Ascending aorta (tissue), 2 donors: ENCODE measurements at regions of chr12 and their contacts with region 1.

Region 1: GRCh38 chr12:90978117-90978770 is 23.3 kb upstream of the CCER1 start:
- DNase-seq: no peak
- H3K4me3 ChIP-seq: no peak overlapping the region
- H3K27ac ChIP-seq: no peak overlapping the region
- H3K4me1 ChIP-seq: no peaks in the 10 kb centered on the region
- H3K27me3 ChIP-seq: no peaks in the 10 kb centered on the region
- CTCF ChIP-seq: peak; percentile 39 to 60 (median 55)

Region 2: GRCh38 chr12:91178139-91178561 is 199.9 kb after region 1 on chr12:
- intact Hi-C with region 1: loop called (anchors 5 kb)
- DNase-seq: no peak
- H3K4me3 ChIP-seq: peak overlapping the region; percentile 46 to 48
- H3K27ac ChIP-seq: no peak overlapping the region
- H3K4me1 ChIP-seq: no peaks in the 10 kb centered on the region
- H3K27me3 ChIP-seq: no peaks in the 10 kb centered on the region
- CTCF ChIP-seq: peak in 2 of 3 experiments; percentile 39 to 60

Region 3: DNA sequence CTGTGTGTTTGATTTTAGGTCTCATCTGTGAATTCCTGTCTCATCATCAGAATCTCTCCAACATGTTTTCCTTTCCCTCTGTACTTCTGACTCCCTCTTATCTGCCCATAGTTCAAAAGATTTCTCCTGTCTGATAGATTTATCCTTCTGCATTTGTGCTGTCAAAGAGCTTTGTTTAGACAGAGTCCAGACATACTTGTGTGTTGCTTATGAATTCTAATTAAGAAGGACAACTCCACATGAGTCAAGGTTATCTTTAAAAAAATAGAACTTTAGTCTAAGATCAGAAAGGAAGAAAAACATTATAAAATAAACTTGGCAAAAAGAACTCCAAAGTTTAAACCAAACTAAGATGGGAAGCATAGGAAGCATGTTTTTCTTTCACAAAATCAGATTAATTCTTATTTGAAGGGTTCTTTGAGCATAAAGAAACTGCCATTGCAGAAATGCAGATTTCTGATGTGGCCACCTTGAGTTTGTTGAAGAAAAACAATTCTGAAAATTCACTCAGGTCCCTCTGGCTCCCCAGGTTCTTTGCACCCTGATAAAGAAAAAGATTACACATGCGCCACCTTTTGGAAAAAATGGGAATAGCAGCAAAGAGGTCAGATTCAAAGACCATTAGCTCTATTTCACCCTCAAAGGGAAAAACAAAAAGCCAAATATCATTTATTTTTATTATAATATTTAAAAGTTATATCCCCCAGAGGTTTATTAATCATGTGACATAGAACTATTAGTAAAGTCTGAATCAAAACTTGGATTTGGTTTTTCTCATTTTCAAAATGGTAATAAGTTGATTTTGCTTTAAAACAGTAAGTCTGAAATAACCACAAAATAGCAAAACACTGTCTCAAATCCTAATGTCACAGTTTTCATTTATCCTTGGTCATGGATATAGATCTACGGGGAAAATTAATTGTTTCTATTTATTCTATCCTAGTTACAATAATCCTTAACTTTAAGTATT is 348.1 kb after region 1 on chr12:
- intact Hi-C with region 1: loop called (anchors 5 kb)
- DNase-seq: peak in 1 of 2 donors; percentile 63
- H3K4me3 ChIP-seq: peak overlapping the region in 1 of 2 donors; percentile 26
- H3K27ac ChIP-seq: peak overlapping the region; percentile 8 to 19
- H3K4me1 ChIP-seq: peaks cover 0 to 3% of the 10 kb centered on the region in 2 donors
- H3K27me3 ChIP-seq: no peaks in the 10 kb centered on the region
- CTCF ChIP-seq: peak; percentile 34 to 80 (median 70)

Region 4: DNA sequence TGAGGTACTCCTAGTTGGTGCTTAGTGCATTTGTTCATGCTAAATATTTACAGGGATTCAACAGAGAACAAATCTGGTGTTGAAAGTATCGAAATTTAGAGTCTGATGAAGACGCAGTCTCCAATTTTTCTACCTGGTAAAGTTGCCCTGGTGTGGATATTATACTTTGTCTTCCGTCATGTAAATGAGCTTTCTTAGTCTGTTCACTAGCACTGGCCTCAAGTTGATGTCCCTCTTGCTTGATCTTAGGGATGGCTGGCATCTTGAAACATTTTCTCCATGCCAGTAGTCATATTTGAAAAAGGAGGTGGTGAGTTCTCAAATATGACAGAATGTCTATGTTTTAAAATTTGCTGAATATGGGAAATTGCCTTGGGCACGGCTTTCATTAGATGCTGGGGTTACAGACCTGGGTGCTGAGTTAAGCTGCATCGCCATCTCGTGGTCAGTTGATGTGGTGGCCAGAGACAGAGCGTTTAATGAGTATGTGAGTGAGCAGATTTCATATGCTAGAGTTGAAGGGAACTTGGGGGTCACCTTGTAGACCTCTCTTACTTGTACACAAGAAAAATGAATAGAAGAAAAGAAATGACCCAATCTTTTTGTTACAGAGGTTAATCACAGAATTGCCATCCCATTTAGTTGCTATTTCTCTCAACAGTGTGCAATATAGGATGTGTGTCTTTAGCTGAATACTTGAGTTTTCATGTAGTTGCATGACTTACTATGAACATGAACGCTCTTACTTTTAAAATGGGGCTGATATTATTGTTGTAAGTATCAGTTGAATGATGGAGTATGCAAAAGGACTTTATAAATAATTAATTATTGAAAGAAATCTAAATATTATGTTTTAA is 377.1 kb after region 1 on chr12:
- intact Hi-C with region 1: loop called (anchors 2 kb)
- DNase-seq: peak in 1 of 2 donors; percentile 84
- H3K4me3 ChIP-seq: no peak overlapping the region
- H3K27ac ChIP-seq: no peak overlapping the region
- H3K4me1 ChIP-seq: no peaks in the 10 kb centered on the region
- H3K27me3 ChIP-seq: no peaks in the 10 kb centered on the region
- CTCF ChIP-seq: peak; percentile 60 to 86 (median 80)